ENCODE measurements at regions of chr15 and their contacts with region 1.

Region 1: DNA sequence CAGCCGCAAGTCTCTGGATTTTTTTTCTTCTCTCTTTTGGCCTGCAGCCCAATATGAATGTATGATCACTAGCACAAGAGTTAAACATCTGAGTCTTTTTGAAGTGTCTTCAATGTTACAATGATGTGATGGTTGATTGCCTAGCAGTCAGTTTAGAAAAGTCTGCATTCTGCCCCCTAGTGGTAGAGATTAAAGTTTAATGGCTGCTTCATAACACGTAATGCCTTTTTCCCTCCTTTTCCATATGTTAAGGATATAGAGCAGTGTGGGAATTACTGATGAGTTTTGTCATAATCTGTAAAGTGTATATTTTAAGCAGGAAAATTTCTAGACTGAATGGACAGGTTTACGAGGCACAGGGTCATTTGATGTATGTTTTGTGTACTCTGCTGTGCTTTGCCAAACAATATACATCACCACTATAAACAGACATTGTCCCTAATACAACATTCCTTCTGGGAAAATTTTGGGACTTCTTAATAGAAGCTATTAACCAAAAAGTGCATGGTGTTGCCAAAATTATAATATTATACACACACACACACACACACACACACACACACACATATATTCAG is 1038.5 kb upstream of the NR2F2 start:
- DNase-seq: peak; percentile 31
- CTCF ChIP-seq: peak; percentile 52

Region 2: GRCh38 chr15:94582369-94582768 is 709.6 kb before region 1 on chr15:
- CTCF ChIA-PET with region 1: interaction called, 24 read pairs
- POLR2A ChIA-PET with region 1: no interaction called
- DNase-seq: peak; percentile 20
- CTCF ChIP-seq: peak; percentile 57

Region 3: DNA sequence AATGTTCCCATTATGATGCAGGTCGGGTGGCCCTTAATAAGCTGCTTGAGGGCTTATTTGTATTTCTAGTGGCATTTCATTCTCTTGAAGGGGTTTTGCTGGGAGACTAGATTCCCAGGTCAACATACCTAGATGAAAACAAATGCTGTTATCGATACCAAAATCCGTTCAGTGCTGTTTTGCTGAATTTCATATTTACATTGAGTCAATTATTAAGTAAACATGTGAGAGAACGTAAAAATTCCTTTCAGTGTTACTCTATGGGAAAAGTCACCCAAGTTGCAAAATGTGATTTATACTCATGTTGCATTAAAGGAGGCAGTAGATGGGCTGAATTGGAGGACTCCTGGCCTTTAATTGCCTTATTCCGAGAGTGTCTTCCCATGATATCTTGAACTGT is 27.2 kb after region 1 on chr15:
- CTCF ChIA-PET with region 1: interaction called, 11 read pairs
- POLR2A ChIA-PET with region 1: no interaction called
- DNase-seq: no peak
- CTCF ChIP-seq: no peak

Measured in GM10248 (cell line).